ENCODE measurements at regions of chr5 and their contacts with region 1.

Region 1: DNA sequence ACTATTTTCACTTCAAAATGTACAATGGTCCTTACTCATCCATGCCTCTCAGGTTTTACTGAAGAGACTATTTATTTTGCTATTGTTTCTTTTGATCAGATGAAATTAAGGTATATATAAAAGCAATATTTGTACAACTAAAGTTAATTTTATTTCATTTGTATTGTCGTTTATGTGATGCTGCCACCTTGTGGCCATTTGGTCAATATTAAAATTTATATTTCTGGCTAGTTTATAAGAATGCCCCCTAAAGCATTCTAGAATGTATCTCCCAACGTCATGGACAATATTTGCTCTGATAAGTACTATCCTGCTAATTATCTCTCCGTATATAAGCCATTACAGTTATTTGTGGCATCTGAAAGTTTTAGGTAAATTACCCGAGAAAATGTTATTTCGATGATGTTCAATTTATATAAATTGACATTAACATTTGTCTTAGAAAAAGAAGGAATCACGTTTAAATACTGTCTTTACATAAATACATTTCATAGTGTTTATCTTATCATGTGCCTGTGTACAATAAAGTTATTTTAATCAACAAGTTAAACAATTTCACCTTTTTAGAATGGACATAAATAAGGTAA is 680.0 kb downstream of the TAF11L14 start:
- DNase-seq: no peak
- H3K4me3 Mint-ChIP-seq: no peak overlapping the region
- H3K27ac Mint-ChIP-seq: no peak overlapping the region
- H3K4me1 Mint-ChIP-seq: no peaks in the 10 kb centered on the region
- H3K27me3 Mint-ChIP-seq: no peaks in the 10 kb centered on the region

Region 2: GRCh38 chr5:17216176-17216973 is 1097.9 kb before region 1 on chr5:
- CTCF ChIA-PET with region 1: interaction called, 6 read pairs
- POLR2A ChIA-PET with region 1: no interaction called
- intact Hi-C with region 1: loop called (anchors 1 kb)
- DNase-seq: peak; percentile 71
- H3K4me3 Mint-ChIP-seq: peak overlapping the region; percentile 29
- H3K27ac Mint-ChIP-seq: no peak overlapping the region
- H3K4me1 Mint-ChIP-seq: peaks cover 11% of the 10 kb centered on the region
- H3K27me3 Mint-ChIP-seq: peaks cover 38% of the 10 kb centered on the region

Region 3: GRCh38 chr5:18281682-18282557 is 32.4 kb before region 1 on chr5:
- CTCF ChIA-PET with region 1: no interaction called
- POLR2A ChIA-PET with region 1: no interaction called
- intact Hi-C with region 1: no loop called
- DNase-seq: no peak
- H3K4me3 Mint-ChIP-seq: no peak overlapping the region
- H3K27ac Mint-ChIP-seq: no peak overlapping the region
- H3K4me1 Mint-ChIP-seq: no peaks in the 10 kb centered on the region
- H3K27me3 Mint-ChIP-seq: no peaks in the 10 kb centered on the region

Measured in activated CD4-positive, alpha-beta memory T cell treated with anti-CD3 and anti-CD28 coated beads for 36 hours (primary cell).